A673 (cell line): ENCODE measurements at regions of chr18 and their contacts with region 1.

Region 1: GRCh38 chr18:21038201-21038600 is 73.4 kb downstream of the ROCK1 start:
- DNase-seq: peak; percentile 50
- H3K4me3 ChIP-seq: no peak overlapping the region
- H3K27ac ChIP-seq: no peak overlapping the region
- H3K4me1 ChIP-seq: peaks cover 9% of the 10 kb centered on the region
- H3K27me3 ChIP-seq: no peaks in the 10 kb centered on the region
- CTCF ChIP-seq: no peak

Region 2: DNA sequence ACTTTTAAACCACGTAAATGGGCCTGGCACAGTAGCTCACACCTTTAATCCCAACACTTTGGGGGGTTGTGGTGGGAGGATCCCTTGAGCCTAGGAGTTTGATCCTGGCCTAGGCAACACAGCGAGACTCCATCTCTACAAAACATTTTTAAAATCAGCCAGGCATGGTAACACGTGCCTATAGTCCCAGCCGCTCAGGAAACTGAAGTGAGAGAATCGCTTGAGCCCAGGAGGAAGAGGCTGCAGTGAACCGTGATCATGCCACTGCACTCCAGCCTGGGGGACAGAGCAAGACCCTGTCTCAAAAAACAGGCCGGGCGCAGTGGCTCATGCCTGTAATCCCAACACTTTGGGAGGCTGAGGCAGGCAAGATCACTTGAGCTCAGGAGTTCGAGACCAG is 61.2 kb after region 1 on chr18:
- CTCF ChIA-PET with region 1: no interaction called
- POLR2A ChIA-PET with region 1: no interaction called
- intact Hi-C with region 1: loop called (anchors 10 kb)
- DNase-seq: no peak
- H3K4me3 ChIP-seq: no peak overlapping the region
- H3K27ac ChIP-seq: no peak overlapping the region
- H3K4me1 ChIP-seq: no peaks in the 10 kb centered on the region
- H3K27me3 ChIP-seq: no peaks in the 10 kb centered on the region
- CTCF ChIP-seq: no peak

Region 3: GRCh38 chr18:22773944-22774343 is 1735.7 kb after region 1 on chr18:
- CTCF ChIA-PET with region 1: no interaction called
- POLR2A ChIA-PET with region 1: no interaction called
- intact Hi-C with region 1: no loop called
- DNase-seq: no peak
- H3K4me3 ChIP-seq: no peak overlapping the region
- H3K27ac ChIP-seq: no peak overlapping the region
- H3K4me1 ChIP-seq: no peaks in the 10 kb centered on the region
- H3K27me3 ChIP-seq: no peaks in the 10 kb centered on the region
- CTCF ChIP-seq: no peak